ENCODE measurements at regions of chr7 and their contacts with region 1.

Region 1: GRCh38 chr7:47968847-47969774 is 10.3 kb downstream of the HUS1 start:
- DNase-seq: no peak
- H3K4me3 ChIP-seq: no peak overlapping the region
- H3K27ac ChIP-seq: no peak overlapping the region
- H3K27me3 ChIP-seq: no peaks in the 10 kb centered on the region
- CTCF ChIP-seq: peak; percentile 97

Region 2: GRCh38 chr7:47945261-47946001 is 23.7 kb before region 1 on chr7:
- CTCF ChIA-PET with region 1: interaction called, 76 read pairs
- POLR2A ChIA-PET with region 1: interaction called, 4 read pairs
- DNase-seq: no peak
- H3K4me3 ChIP-seq: no peak overlapping the region
- H3K27ac ChIP-seq: no peak overlapping the region
- H3K27me3 ChIP-seq: no peaks in the 10 kb centered on the region
- CTCF ChIP-seq: peak; percentile 75

Region 3: DNA sequence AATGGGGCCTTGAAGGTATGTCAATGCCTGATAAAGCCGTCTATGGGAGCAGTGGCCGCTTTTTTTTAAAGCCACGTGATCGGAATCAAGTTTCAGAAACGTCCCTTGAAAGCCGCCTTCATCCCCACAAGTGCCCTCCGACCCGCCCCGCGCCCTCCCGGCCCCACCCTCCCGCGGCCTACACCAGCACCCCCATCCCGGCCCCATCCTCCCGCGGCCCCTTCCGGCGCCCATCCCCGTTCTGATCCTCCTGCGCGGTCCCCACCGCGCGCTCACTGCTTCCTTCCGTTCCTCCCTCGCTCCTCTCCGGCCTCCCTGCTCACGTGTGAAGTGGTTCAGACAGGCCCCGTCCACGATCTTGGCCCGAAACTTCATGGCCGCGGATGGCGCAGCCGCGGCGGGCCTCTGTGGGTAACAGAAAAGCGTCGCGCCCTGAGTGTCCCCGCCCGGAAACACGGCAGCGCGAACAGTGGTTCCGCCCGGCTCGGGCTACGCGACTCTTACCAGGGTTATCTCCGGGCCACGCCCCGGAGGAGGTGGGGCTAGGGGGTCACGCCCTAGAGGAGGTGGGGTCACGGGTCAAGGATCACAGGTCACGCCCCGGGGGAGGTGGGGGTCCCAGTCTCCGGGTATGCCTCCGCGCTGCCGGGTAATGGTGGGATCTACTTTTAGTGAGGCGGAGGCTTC is 10.2 kb after region 1 on chr7 and contains the start of gene HUS1:
- CTCF ChIA-PET with region 1: interaction called, 13 read pairs
- POLR2A ChIA-PET with region 1: no interaction called
- DNase-seq: peak; percentile 59
- H3K4me3 ChIP-seq: peak within 1 kb of the TSS; percentile 85
- H3K27ac ChIP-seq: peak within 1 kb of the TSS; percentile 81
- H3K27me3 ChIP-seq: no peaks in the 10 kb centered on the region
- CTCF ChIP-seq: no peak
- polyA plus RNA-seq, gene HUS1: 20.0 and 27.9 TPM in 2 replicates

Measured in AG04450 (cell line).